OCI-LY7 (cell line): ENCODE measurements at regions of chr3 and their contacts with region 1.

Region 1: GRCh38 chr3:197586181-197586580 is 30.4 kb upstream of the BDH1 start:
- DNase-seq: no peak
- H3K4me3 ChIP-seq: no peak overlapping the region
- H3K27ac ChIP-seq: no peak overlapping the region
- H3K4me1 ChIP-seq: no peaks in the 10 kb centered on the region
- CTCF ChIP-seq: no peak

Region 2: GRCh38 chr3:197555281-197556261 is 30.6 kb before region 1 on chr3 and contains the start of gene BDH1:
- CTCF ChIA-PET with region 1: no interaction called
- POLR2A ChIA-PET with region 1: no interaction called
- intact Hi-C with region 1: no loop called
- DNase-seq: peak; percentile 68
- H3K4me3 ChIP-seq: peak within 1 kb of the TSS; percentile 74
- H3K27ac ChIP-seq: peak within 1 kb of the TSS; percentile 65
- H3K4me1 ChIP-seq: peaks cover 20% of the 10 kb centered on the region
- CTCF ChIP-seq: peak; percentile 54; the same call in 1 of the 2 replicates
- total RNA-seq, gene BDH1: 14.1 TPM in 2 replicates

Region 3: GRCh38 chr3:197674741-197675562 is 88.8 kb after region 1 on chr3:
- CTCF ChIA-PET with region 1: no interaction called
- POLR2A ChIA-PET with region 1: interaction called, 10 read pairs
- intact Hi-C with region 1: no loop called
- DNase-seq: peak; percentile 91
- H3K4me3 ChIP-seq: no peak overlapping the region
- H3K27ac ChIP-seq: peak overlapping the region; percentile 76
- H3K4me1 ChIP-seq: peaks cover 23% of the 10 kb centered on the region
- CTCF ChIP-seq: no peak